Sciatic nerve (tissue), 2 donors: ENCODE measurements at regions of chr13 and their contacts with region 1.

Region 1: DNA sequence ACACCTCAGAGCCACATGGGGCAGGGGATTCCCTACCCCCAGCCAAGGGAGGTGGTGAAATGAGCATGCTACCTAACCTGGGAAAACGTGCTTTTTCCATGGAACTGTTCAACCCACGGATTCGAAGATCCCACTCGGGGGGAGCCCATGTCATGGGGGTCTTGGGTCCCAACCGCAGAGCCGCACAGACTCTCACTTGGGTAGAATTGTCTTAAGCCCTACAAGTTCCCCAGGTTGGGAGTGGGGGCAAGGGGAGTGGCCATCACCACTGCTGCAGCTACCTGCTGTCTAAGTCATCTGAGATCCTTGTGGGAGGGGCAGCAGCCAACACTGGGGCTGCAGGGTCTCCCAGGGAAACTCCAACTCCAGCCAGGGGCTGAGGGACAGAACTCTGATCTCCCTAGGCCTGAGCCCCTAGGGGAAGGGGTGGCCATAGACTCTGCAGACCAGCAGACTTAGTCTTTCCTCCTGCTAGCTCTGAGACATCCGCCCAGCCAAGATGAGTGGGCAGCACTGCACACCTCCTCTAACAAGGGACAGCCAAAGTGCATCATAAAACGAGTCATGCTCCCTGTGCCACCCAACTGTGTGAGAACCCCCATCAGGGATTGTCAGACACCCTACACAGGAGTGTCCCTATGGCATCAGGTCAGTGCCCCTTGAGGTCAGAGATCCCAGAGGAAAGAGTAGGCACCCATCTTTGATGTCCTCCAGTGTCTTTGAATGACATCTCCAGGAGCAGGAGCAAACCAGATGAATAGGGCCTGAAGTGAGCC is 610.4 kb upstream of the SLITRK6 start:
- DNase-seq: no peak
- ATAC-seq: no peak

Region 2: DNA sequence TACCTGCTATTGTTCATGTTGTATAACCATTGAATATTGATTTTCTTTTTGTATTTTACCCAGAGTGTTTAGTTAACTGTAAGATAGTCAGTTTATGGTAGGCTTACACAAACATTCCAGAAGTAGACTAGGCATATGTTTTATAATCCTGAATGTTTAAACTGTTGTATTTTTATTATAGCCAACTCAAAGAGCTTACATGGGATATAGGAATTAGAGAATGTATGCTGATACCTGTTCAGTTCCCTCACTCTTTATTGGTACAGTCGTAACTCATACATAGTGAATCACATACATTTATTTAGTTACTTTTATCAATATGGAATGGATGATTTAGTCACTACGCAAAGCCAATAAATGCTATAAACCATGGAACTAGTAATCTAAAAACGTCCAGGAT is 1919.4 kb after region 1 on chr13:
- intact Hi-C with region 1: loop called (anchors 5 kb)
- DNase-seq: no peak
- ATAC-seq: no peak